WTC11 (cell line): ENCODE measurements at regions of chr13 and their contacts with region 1.

Region 1: GRCh38 chr13:28548872-28549271 is 53.9 kb upstream of the FLT1 start:
- DNase-seq: no peak
- ATAC-seq: peak; percentile 85
- H3K4me3 Mint-ChIP-seq: no peak overlapping the region
- H3K27ac Mint-ChIP-seq: no peak overlapping the region; the same call in 1 of the 2 replicates
- H3K4me1 Mint-ChIP-seq: peaks cover 18% of the 10 kb centered on the region
- H3K27me3 Mint-ChIP-seq: peaks cover 7% of the 10 kb centered on the region; the same call in 1 of the 2 replicates
- CTCF ChIP-seq: no peak

Region 2: GRCh38 chr13:28636674-28637317 is 87.9 kb after region 1 on chr13:
- CTCF ChIA-PET with region 1: interaction called, 11 read pairs
- POLR2A ChIA-PET with region 1: no interaction called
- DNase-seq: peak; percentile 68
- ATAC-seq: peak; percentile 97
- H3K4me3 Mint-ChIP-seq: no peak overlapping the region
- H3K27ac Mint-ChIP-seq: peak overlapping the region; percentile 45; the same call in 1 of the 2 replicates
- H3K4me1 Mint-ChIP-seq: peaks cover 14% of the 10 kb centered on the region
- H3K27me3 Mint-ChIP-seq: no peaks in the 10 kb centered on the region
- CTCF ChIP-seq: peak; percentile 63; the same call in 1 of the 2 replicates

Region 3: GRCh38 chr13:28658796-28659620 is 110.1 kb after region 1 on chr13 and contains the start of gene POMP:
- CTCF ChIA-PET with region 1: interaction called, 23 read pairs
- POLR2A ChIA-PET with region 1: no interaction called
- DNase-seq: peak; percentile 80
- ATAC-seq: peak; percentile 91
- H3K4me3 Mint-ChIP-seq: peak within 1 kb of the TSS; percentile 92
- H3K27ac Mint-ChIP-seq: peak within 1 kb of the TSS; percentile 51
- H3K4me1 Mint-ChIP-seq: peaks cover 35% of the 10 kb centered on the region
- H3K27me3 Mint-ChIP-seq: no peaks in the 10 kb centered on the region
- CTCF ChIP-seq: no peak
- total RNA-seq, gene POMP: 90.8 to 95.0 TPM (median 92.2 TPM) in 3 replicates